ENCODE measurements at regions of chr15 and their contacts with region 1.

Region 1: GRCh38 chr15:52679232-52680040 is at the start of gene ATOSA:
- DNase-seq: peak; percentile 90
- H3K4me3 ChIP-seq: peak within 1 kb of the TSS; percentile 59 to 87 (median 80)
- H3K27ac ChIP-seq: peak within 1 kb of the TSS; percentile 92
- H3K4me1 ChIP-seq: peaks cover 18% of the 10 kb centered on the region
- H3K27me3 ChIP-seq: peaks cover 11 to 17% of the 10 kb centered on the region in 2 experiments
- CTCF ChIP-seq: no peak
- POLR2A ChIP-seq: no peak
- total RNA-seq, gene ATOSA: 39.1 and 41.1 TPM in 2 replicates

Region 2: DNA sequence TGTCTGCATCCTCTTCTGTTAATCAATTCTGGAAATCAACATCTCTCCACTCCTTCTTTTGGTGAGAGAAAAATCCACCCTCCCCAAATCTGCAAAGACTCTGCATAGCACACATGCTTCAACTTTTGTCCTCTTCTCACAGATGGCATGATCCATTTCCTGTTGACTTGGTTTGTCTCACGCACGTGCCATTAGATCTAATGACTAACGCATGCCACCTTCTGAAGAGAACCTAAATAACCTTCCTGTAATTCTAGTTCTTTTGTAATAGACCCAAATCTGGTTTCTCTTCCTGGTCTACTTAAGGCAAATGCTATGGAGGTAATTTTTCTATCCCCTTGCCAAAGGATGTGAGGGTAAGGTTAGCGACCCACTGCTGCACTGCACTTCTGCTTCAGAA is 50.7 kb after region 1 on chr15:
- CTCF ChIA-PET with region 1: interaction called, 4 read pairs
- POLR2A ChIA-PET with region 1: no interaction called
- dilution Hi-C with region 1: no loop called
- intact Hi-C with region 1: loop called (anchors 1 kb)
- DNase-seq: peak; percentile 92
- H3K4me3 ChIP-seq: no peak overlapping the region
- H3K27ac ChIP-seq: peak overlapping the region; percentile 73
- H3K4me1 ChIP-seq: peaks cover 38% of the 10 kb centered on the region
- H3K27me3 ChIP-seq: no peaks in the 10 kb centered on the region
- CTCF ChIP-seq: no peak
- POLR2A ChIP-seq: no peak